IMR-90 (cell line): ENCODE measurements at regions of chr1 and their contacts with region 1.

Region 1: GRCh38 chr1:225652729-225653462 is at the start of gene ENAH:
- DNase-seq: peak; percentile 76
- ATAC-seq: peak; percentile 75
- H3K4me3 ChIP-seq: peak within 1 kb of the TSS; percentile 94
- H3K27ac ChIP-seq: peak within 1 kb of the TSS; percentile 98
- H3K4me1 ChIP-seq: peaks cover 14% of the 10 kb centered on the region
- H3K27me3 ChIP-seq: no peaks in the 10 kb centered on the region
- CTCF ChIP-seq: no peak
- POLR2A ChIP-seq: no peak; the same call in none of the 2 replicates
- RAD21 ChIP-seq: peak; percentile 11
- total RNA-seq, gene ENAH: 82.5 and 86.9 TPM in 2 replicates

Region 2: GRCh38 chr1:225480825-225481434 is 172.0 kb before region 1 on chr1:
- CTCF ChIA-PET with region 1: no interaction called
- POLR2A ChIA-PET with region 1: no interaction called
- dilution Hi-C with region 1: no loop called
- in situ Hi-C with region 1: no loop called
- intact Hi-C with region 1: loop called (anchors 5 kb)
- DNase-seq: no peak
- ATAC-seq: peak; percentile 42; the same call in 1 of the 2 replicates
- H3K4me3 ChIP-seq: no peak overlapping the region
- H3K27ac ChIP-seq: no peak overlapping the region
- H3K4me1 ChIP-seq: peaks cover 4% of the 10 kb centered on the region
- H3K27me3 ChIP-seq: no peaks in the 10 kb centered on the region
- CTCF ChIP-seq: peak; percentile 48
- POLR2A ChIP-seq: no peak
- RAD21 ChIP-seq: peak; percentile 66

Region 3: DNA sequence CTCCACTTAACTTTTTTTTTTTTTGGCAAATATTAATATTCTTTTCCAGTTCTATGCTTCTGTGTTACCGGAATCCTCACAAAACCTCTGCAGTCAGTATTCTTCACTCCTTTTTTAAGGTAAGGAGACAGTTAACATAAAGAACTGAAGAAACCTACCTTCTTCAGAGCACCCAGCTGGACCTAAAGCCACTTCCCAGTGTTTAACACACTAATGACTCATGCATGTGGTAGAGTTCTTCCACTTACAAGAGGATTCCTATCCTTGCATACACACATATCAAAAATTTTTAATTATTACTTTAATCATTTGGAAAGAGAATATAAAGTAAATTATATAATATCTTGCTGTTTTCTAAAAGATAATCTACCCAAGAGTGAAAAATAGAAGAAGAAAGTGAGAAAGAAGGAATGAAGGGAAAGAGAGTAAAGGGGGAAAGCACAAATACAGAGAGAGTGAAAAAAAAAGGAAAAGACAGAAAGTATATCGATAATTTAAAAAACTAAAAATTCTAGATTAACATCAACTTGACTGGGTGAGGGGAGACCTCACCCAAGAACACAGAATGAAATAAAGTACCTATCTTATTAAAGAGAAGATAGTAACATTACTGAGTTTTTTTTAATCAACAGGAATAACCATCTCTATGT is 54.8 kb before region 1 on chr1:
- CTCF ChIA-PET with region 1: interaction called, 11 read pairs
- POLR2A ChIA-PET with region 1: no interaction called
- dilution Hi-C with region 1: no loop called
- in situ Hi-C with region 1: no loop called
- intact Hi-C with region 1: no loop called
- DNase-seq: peak; percentile 71
- ATAC-seq: peak; percentile 56
- H3K4me3 ChIP-seq: no peak overlapping the region
- H3K27ac ChIP-seq: no peak overlapping the region
- H3K4me1 ChIP-seq: no peaks in the 10 kb centered on the region
- H3K27me3 ChIP-seq: no peaks in the 10 kb centered on the region
- CTCF ChIP-seq: no peak
- POLR2A ChIP-seq: no peak
- RAD21 ChIP-seq: no peak

Region 4: GRCh38 chr1:225735252-225736149 is 82.6 kb after region 1 on chr1:
- CTCF ChIA-PET with region 1: no interaction called
- POLR2A ChIA-PET with region 1: no interaction called
- dilution Hi-C with region 1: no loop called
- in situ Hi-C with region 1: no loop called
- intact Hi-C with region 1: loop called (anchors 1 kb)
- DNase-seq: peak; percentile 98
- ATAC-seq: peak; percentile 95
- H3K4me3 ChIP-seq: no peak overlapping the region
- H3K27ac ChIP-seq: peak overlapping the region; percentile 79
- H3K4me1 ChIP-seq: peaks cover 13% of the 10 kb centered on the region
- H3K27me3 ChIP-seq: no peaks in the 10 kb centered on the region
- CTCF ChIP-seq: peak; percentile 34
- POLR2A ChIP-seq: peak; percentile 64
- RAD21 ChIP-seq: peak; percentile 40

Region 5: DNA sequence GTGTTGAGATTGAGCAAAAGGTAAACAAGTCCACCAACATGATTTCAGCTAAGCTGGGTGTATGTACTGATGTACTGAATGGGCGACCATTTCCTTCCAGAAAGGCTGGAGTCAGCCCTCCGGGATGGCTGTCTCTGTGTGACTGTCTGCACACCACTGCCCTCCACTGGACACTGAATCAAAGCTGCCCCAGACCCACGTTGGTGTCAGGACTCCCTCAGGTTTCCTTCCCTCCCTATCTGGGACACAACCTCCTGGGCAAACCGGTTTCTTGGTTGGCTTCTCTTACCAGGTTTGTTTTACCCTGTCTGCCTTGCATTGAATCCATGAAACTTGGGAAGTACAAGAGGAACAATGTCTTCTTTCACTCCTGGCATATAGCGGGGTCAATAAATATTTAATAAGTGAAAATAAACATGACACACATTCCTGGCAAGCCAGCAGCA is 119.5 kb after region 1 on chr1:
- CTCF ChIA-PET with region 1: interaction called, 9 read pairs
- POLR2A ChIA-PET with region 1: interaction called, 7 read pairs
- dilution Hi-C with region 1: no loop called
- in situ Hi-C with region 1: loop called (anchors 5 kb)
- intact Hi-C with region 1: loop called (anchors 1 kb)
- DNase-seq: peak; percentile 88
- ATAC-seq: peak; percentile 90
- H3K4me3 ChIP-seq: no peak overlapping the region
- H3K27ac ChIP-seq: peak overlapping the region; percentile 20; the same call in 1 of the 2 replicates
- H3K4me1 ChIP-seq: peaks cover 16% of the 10 kb centered on the region
- H3K27me3 ChIP-seq: no peaks in the 10 kb centered on the region
- CTCF ChIP-seq: peak; percentile 94
- POLR2A ChIP-seq: peak; percentile 60; the same call in 1 of the 2 replicates
- RAD21 ChIP-seq: peak; percentile 99

Region 6: DNA sequence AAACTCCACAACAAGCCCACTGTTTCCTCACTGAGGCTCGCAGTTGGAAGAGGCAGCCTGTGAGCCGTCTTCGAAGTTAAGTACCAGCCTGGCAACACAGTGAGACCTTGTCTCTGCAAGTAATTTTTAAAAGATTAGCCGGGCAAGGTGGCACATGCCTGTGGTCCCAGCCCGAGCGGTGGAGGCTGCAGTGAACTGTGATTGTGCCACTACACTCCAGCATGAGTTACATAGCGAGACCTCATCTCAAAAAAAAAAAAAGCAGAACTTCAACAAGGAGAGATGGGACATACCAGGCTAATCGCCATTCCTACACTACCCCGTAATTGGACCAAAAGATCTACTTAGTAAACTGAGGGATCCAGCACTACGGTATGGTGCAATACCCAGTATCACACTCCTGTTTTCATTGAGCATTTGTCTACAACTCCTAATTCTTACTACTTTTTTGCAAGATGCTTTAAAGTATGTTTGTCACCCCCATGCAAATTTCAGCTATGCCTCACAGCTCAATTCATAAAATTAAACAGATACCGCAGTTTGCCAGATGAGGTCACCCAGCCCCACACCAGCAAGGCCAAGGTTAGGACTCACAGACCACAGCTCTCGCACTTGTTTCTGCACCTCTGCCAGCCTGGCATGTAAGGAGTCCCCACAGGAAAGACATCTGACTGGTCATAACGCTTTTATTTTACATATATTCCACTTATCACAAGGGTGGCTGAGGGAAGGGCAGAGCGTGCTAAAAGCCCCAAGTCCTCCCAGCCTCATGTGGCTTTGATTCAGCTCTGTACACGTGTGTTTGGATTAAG is 325.2 kb after region 1 on chr1:
- CTCF ChIA-PET with region 1: no interaction called
- POLR2A ChIA-PET with region 1: no interaction called
- dilution Hi-C with region 1: no loop called
- in situ Hi-C with region 1: no loop called
- intact Hi-C with region 1: loop called (anchors 10 kb)
- DNase-seq: no peak
- ATAC-seq: no peak
- H3K4me3 ChIP-seq: no peak overlapping the region
- H3K27ac ChIP-seq: no peak overlapping the region
- H3K4me1 ChIP-seq: no peaks in the 10 kb centered on the region
- H3K27me3 ChIP-seq: no peaks in the 10 kb centered on the region
- CTCF ChIP-seq: no peak
- POLR2A ChIP-seq: no peak
- RAD21 ChIP-seq: no peak